ENCODE measurements at regions of chr15 and their contacts with region 1.

Region 1: DNA sequence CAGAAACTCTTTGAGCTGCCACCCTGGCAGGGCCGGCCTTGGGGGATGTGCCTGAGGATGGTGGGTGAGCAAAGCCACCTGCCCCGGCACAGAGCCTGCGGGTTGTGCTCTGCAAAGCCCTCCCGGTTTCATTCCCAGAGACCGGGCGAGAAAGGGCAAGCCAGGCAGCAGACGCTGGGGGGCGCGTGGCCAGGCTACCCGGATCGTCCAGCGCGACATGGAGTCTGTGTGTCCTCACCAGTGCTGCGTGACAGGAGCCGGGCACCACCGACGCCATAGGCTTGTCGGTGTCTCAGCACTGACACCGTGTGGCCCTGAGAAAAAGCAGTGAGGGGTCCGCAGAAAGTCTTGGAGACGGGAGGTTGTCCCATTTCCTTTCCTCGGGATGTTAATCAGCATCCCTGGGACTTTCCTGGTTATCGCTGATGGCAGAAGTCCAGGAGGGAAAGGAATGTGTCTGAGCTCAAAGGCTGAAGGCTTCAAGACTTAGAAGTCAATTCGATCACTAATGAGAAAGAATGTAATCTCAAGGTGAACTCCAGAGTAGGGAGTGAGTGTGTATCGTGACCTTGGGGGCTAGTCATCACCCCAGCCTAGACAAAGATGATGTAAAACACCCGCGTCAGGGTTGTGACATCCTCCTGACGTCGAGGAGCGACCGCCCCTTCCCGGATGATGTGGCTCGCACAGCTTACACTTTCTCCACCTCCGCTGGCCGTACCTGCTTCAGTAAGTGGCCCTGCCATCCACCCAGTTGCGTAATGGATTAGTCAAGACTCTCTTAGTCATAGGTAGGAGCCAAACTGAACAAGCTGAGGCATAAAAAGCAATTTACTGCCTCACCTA is 36.3 kb upstream of the PLA2G4E start:
- DNase-seq: peak; percentile 77 to 82
- ATAC-seq: peak; percentile 88 to 96 (median 94)
- H3K4me3 ChIP-seq: peak overlapping the region in 7 of 10 donors; percentile 13 to 38 (median 34)
- H3K27ac ChIP-seq: peak overlapping the region in 1 of 10 donors; percentile 62
- H3K4me1 ChIP-seq: peaks cover 0 to 21% (median 8%) of the 10 kb centered on the region in 9 donors
- H3K27me3 ChIP-seq: peaks cover 0 to 19% (median 0%) of the 10 kb centered on the region in 7 donors
- CTCF ChIP-seq: peak; percentile 57 to 87 (median 75)

Region 2: DNA sequence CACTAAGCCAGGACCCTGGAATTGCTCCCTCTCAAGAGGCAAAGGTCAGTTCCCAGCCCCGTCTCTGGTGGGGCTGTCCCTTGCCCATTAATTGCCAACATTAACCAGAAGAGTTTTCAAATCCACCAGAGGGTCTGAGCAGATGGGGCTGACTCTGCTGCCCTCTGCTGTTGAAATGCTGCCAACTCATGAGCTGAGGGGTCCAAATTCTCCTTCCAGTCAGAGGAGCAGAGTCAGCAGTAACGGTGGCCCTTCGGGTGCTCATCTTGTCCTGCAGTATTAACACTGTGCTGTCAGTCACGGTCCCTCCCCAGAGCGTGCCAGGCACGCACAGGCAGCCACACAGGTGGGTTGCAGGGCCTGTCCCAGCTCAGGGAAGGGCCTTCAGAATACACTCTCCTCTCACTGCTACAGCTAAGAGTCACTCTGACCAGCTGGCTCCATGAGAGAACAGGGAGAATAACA is 152.6 kb before region 1 on chr15:
- intact Hi-C with region 1: loop called in 2 of 10 experiments (anchors 10 kb)
- DNase-seq: peak in 1 of 2 donors; percentile 70
- ATAC-seq: peak; percentile 56 to 79 (median 69)
- H3K4me3 ChIP-seq: no peak overlapping the region
- H3K27ac ChIP-seq: peak overlapping the region in 9 of 10 donors; percentile 9 to 70 (median 48)
- H3K4me1 ChIP-seq: peaks cover 3 to 50% (median 37%) of the 10 kb centered on the region in 9 donors
- H3K27me3 ChIP-seq: no peaks in the 10 kb centered on the region
- CTCF ChIP-seq: peak; percentile 68 to 88 (median 85)

Region 3: GRCh38 chr15:41930221-41930866 is 126.8 kb before region 1 on chr15:
- intact Hi-C with region 1: loop called in 1 of 10 experiments (anchors 10 kb)
- DNase-seq: no peak
- ATAC-seq: peak; percentile 22 to 80 (median 49)
- H3K4me3 ChIP-seq: no peak overlapping the region
- H3K27ac ChIP-seq: peak overlapping the region in 9 of 10 donors; percentile 47 to 92 (median 75)
- H3K4me1 ChIP-seq: peaks cover 41 to 100% (median 97%) of the 10 kb centered on the region in 9 donors
- H3K27me3 ChIP-seq: no peaks in the 10 kb centered on the region
- CTCF ChIP-seq: peak in 4 of 9 donors; percentile 32 to 51 (median 49)

Region 4: GRCh38 chr15:41989259-41989933 is 67.8 kb before region 1 on chr15:
- intact Hi-C with region 1: loop called (anchors 1 to 5 kb)
- DNase-seq: peak; percentile 87 to 89
- ATAC-seq: peak; percentile 82 to 95 (median 90)
- H3K4me3 ChIP-seq: no peak overlapping the region
- H3K27ac ChIP-seq: no peak overlapping the region
- H3K4me1 ChIP-seq: peaks cover 0 to 9% (median 0%) of the 10 kb centered on the region in 9 donors
- H3K27me3 ChIP-seq: peaks cover 0 to 3% (median 0%) of the 10 kb centered on the region in 7 donors
- CTCF ChIP-seq: peak; percentile 97 to 99 (median 99)

Region 5: DNA sequence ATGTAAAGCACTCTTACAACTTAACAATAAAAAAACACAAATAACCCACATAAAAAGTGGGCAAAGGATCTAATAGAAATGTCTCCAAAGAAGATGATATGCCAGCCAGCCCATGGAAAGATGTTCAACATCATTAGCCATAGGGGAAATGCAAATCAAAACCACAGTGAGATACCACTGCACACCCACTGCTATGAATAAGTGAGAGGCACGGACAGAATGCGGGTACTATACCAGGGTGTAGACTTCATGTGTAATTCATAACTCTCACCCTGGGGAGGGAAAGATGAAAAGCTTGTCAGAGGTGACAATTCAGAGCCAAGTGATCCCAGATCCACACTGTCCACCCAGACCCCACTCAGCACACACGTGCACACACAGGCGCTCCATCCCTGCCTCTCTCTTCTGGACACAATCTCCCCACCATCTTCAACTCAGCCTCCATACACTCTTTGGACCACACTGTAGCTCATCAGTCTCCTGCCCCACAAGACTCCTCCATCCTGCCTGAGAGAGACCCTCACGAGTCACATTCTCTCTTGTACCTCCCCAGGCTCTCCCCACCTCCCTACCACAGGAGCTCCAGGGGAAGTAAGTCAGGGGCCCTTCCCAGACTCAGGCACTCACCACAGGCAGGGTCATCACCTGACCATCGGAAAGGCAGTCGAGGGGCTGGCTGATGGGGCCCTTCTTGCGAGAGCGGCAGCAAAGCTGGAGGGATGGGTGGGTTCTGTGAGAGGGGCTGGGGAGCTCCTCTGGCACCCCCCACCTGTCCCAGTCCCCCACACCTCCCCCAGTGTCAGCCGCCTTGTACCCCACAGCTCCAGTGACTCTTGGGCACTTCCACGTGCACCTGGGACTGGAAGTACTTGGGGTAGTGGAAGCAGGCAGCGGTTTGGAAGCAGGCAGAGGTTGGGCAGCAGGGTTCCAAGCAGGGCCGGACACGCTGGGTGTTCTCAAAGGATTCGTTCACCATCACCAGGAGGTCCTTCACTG is 57.6 kb before region 1 on chr15:
- intact Hi-C with region 1: loop called in 1 of 10 experiments (anchors 5 kb)
- DNase-seq: no peak
- ATAC-seq: no peak
- H3K4me3 ChIP-seq: no peak overlapping the region
- H3K27ac ChIP-seq: no peak overlapping the region
- H3K4me1 ChIP-seq: no peaks in the 10 kb centered on the region
- H3K27me3 ChIP-seq: peaks cover 0 to 2% (median 0%) of the 10 kb centered on the region in 7 donors
- CTCF ChIP-seq: no peak

Region 6: DNA sequence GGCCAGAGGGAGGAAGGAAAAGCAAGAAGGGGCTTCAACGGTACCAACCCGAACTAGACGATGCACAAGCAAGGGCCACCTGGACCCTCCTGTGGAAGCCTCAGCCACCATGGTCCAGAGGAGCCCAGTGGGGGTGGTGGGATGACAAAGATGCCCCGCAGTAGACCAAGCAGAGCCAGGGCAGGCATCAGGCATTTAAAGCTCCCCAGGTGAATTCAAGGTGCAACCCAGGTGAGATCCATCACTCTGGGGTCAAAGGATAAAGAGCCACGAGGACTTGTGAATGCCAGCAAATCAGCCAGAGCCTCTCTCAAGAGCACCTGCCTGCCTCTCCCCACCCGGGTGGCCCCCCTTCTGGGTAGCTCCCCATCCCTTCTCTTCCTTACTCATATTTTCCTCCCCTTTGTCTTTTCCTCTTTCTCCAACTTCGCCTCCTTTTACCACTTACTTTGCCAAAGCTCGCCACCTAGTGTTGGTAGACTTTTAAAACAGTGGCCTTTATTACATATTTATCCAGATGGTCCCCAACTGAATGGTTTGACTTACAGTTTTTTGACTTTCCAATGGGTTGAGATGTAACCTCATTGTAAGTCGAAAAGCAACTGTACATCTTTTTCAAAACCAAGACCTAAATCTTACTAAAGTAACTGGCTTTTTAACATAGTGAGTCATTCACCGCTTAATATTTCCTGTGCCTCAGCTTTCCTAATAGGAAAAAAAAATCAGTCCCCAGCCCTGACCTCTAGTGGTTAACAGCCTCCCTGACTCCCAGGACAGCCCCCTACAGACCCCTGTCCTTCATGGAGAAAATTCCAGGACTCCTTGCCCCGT is 80.5 kb after region 1 on chr15:
- intact Hi-C with region 1: loop called in 1 of 10 experiments (anchors 10 kb)
- DNase-seq: no peak
- ATAC-seq: peak in 3 of 8 donors; percentile 20 to 41 (median 33)
- H3K4me3 ChIP-seq: no peak overlapping the region
- H3K27ac ChIP-seq: no peak overlapping the region
- H3K4me1 ChIP-seq: peaks cover 0 to 4% (median 0%) of the 10 kb centered on the region in 9 donors
- H3K27me3 ChIP-seq: peaks cover 0 to 3% (median 0%) of the 10 kb centered on the region in 7 donors
- CTCF ChIP-seq: peak; percentile 37 to 68 (median 59)